OCI-LY7 (cell line): ENCODE measurements at regions of chr12 and their contacts with region 1.

Region 1: DNA sequence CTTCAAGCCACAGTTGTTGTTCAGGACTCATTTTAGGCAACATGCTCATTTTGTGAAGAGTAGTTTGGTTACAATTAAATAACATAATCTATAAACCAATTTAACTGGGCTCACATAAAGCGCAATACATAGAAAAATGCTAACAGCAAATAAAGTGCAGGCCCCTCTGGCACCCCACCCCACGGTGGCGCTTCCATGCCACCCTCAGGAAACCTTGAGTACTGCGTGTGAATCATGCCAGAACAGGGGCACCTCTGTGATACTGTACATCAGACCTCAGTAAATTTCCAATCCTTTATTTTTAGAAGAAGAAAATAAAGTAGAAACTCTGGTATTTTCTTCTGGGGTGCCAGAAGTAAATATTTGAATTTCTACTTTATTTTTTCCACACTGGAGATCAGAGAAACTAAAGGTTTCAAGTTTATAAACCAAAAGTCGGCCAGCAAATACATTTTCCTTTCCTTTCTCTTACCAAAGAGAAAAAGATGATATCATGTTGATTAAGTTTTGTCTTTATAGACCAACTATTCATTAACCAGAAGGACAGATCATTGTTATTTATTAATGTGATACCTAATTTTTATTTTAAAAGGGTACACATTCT is 316.8 kb downstream of the PAWR start:
- DNase-seq: peak; percentile 25
- H3K4me3 ChIP-seq: no peak overlapping the region
- H3K27ac ChIP-seq: no peak overlapping the region
- H3K4me1 ChIP-seq: no peaks in the 10 kb centered on the region
- CTCF ChIP-seq: peak; percentile 80

Region 2: GRCh38 chr12:78431931-78432330 is 942.1 kb before region 1 on chr12:
- CTCF ChIA-PET with region 1: no interaction called
- POLR2A ChIA-PET with region 1: no interaction called
- intact Hi-C with region 1: no loop called
- DNase-seq: no peak
- H3K4me3 ChIP-seq: no peak overlapping the region
- H3K27ac ChIP-seq: no peak overlapping the region
- H3K4me1 ChIP-seq: no peaks in the 10 kb centered on the region
- CTCF ChIP-seq: no peak

Region 3: GRCh38 chr12:79522257-79522988 is 148.4 kb after region 1 on chr12:
- CTCF ChIA-PET with region 1: no interaction called
- POLR2A ChIA-PET with region 1: no interaction called
- intact Hi-C with region 1: no loop called
- DNase-seq: no peak
- H3K4me3 ChIP-seq: no peak overlapping the region
- H3K27ac ChIP-seq: no peak overlapping the region
- H3K4me1 ChIP-seq: no peaks in the 10 kb centered on the region
- CTCF ChIP-seq: no peak

Region 4: DNA sequence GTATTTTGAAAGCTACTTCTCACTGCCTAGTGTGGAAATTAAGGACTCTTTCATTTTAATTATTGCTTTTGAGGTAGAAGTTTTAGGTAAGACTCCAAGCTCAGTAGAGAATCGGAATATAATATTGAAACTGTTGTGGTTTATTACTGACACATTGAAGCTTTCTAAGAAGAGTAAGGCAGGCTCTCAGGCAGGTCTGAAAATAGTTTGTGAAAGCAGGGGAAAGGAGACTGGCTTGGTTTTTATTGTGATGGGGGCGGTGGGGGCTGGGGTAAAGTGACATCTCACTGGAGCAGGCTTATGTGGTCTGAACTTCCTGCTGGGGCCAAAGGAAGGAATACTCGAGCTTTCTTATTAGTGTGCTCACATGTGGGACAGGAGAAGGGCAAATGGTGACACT is 804.8 kb after region 1 on chr12:
- CTCF ChIA-PET with region 1: interaction called, 22 read pairs
- POLR2A ChIA-PET with region 1: no interaction called
- intact Hi-C with region 1: no loop called
- DNase-seq: no peak
- H3K4me3 ChIP-seq: no peak overlapping the region
- H3K27ac ChIP-seq: no peak overlapping the region
- H3K4me1 ChIP-seq: no peaks in the 10 kb centered on the region
- CTCF ChIP-seq: no peak